Natural killer cell (primary cell): ENCODE measurements at regions of chr12 and their contacts with region 1.

Region 1: DNA sequence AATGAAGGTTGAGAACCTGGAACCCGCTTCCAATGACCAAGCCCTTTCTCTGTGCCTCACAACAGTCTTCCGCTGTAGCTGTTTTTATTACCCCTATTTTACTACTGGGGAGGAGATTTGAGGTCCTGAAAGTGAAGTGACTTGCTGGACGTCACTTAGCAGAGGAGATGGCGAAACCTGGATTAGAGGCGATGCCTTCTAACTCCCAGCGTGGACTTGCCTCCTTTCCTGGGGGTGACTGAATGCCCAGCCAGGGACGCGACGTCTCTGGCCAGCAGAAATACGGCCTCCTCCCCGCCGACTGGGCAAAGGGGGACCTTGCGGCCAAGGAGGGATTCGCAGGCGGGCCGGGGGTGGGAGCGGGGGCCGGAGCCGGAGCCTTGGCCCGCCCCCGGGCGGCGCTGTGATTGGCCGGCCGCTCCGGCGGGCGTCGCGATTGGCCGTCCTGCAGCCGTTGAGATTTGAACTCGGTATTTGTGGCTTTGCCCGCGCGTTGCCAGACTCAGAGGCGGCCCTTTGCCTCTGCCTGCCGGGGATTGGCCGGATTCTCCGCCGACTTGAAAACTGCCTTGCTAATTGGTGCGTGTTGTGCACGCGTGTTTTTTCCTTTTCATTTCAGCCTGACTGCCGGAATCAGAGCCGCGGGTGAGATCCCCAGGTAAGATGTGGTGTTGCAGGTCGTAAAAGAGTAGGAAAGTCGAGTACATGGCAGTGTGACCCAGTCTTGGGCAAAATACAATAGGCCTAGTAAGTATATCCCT is at the start of gene NCAPD2:
- DNase-seq: peak; percentile 90 to 97
- ATAC-seq: peak; percentile 85 to 94 (median 86)
- H3K4me3 ChIP-seq: peak within 1 kb of the TSS; percentile 81
- H3K4me3 Mint-ChIP-seq: peak within 1 kb of the TSS; percentile 94
- H3K27ac ChIP-seq: peak within 1 kb of the TSS; percentile 88
- H3K27ac Mint-ChIP-seq: peak within 1 kb of the TSS; percentile 97
- H3K4me1 ChIP-seq: peaks cover 22% of the 10 kb centered on the region
- H3K4me1 Mint-ChIP-seq: peaks cover 38% of the 10 kb centered on the region in 2 donors
- H3K27me3 ChIP-seq: no peaks in the 10 kb centered on the region
- H3K27me3 Mint-ChIP-seq: no peaks in the 10 kb centered on the region
- CTCF ChIP-seq: no peak
- total RNA-seq, gene NCAPD2: 38.8 to 53.1 (median 44.1) TPM

Region 2: GRCh38 chr12:6376079-6376869 is 117.4 kb before region 1 on chr12:
- intact Hi-C with region 1: no loop called
- DNase-seq: peak in 1 of 2 donors; percentile 38
- ATAC-seq: peak; percentile 55 to 61 (median 57)
- H3K4me3 ChIP-seq: no peak overlapping the region
- H3K4me3 Mint-ChIP-seq: peak overlapping the region; percentile 60
- H3K27ac ChIP-seq: no peak overlapping the region
- H3K27ac Mint-ChIP-seq: peak overlapping the region; percentile 41 to 76
- H3K4me1 ChIP-seq: peaks cover 32% of the 10 kb centered on the region
- H3K4me1 Mint-ChIP-seq: peaks cover 29 to 46% of the 10 kb centered on the region in 2 donors
- H3K27me3 ChIP-seq: no peaks in the 10 kb centered on the region
- H3K27me3 Mint-ChIP-seq: peaks cover 0 to 5% of the 10 kb centered on the region in 2 donors
- CTCF ChIP-seq: no peak

Region 3: DNA sequence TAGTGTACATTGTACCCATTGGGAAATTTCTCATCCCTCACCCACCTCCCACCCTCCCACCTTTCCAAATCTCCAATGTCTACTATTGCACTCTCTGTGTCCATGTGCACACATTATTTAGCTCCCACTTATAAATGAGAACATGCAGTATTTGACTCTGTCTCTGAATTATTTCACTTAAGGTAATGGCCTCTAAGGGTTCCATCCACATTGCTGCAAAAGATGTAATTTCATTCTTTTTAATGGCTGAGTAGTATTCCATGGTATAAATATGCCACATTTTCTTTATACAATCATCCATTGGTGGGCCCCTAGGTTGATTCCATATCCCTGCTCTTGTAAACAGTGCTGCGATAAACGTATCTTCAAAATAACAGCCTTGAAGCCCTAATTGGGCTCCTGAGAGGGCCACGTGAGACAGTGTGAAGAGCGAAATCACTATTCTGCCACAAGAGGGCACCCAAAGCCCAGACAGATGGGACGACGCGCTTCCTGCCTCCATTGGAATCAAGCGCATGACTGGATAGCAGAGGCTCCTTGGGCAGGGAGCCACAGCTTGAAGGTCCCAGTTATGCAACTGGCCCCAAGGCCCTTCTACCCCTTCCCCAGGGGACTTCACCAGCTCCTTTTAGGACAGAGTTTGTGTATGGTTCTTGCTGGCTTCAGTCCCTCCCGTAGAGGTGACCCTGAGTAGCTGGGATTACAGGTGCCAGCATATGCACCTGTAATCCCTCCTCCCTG is 70.2 kb before region 1 on chr12:
- intact Hi-C with region 1: loop called (anchors 1 kb)
- DNase-seq: peak; percentile 61 to 95
- ATAC-seq: peak; percentile 91 to 96 (median 93)
- H3K4me3 ChIP-seq: no peak overlapping the region
- H3K4me3 Mint-ChIP-seq: no peak overlapping the region
- H3K27ac ChIP-seq: no peak overlapping the region
- H3K27ac Mint-ChIP-seq: peak overlapping the region in 1 of 2 donors; percentile 68
- H3K4me1 ChIP-seq: peaks cover 32% of the 10 kb centered on the region
- H3K4me1 Mint-ChIP-seq: peaks cover 0 to 26% of the 10 kb centered on the region in 2 donors
- H3K27me3 ChIP-seq: no peaks in the 10 kb centered on the region
- H3K27me3 Mint-ChIP-seq: no peaks in the 10 kb centered on the region
- CTCF ChIP-seq: peak; percentile 79

Region 4: DNA sequence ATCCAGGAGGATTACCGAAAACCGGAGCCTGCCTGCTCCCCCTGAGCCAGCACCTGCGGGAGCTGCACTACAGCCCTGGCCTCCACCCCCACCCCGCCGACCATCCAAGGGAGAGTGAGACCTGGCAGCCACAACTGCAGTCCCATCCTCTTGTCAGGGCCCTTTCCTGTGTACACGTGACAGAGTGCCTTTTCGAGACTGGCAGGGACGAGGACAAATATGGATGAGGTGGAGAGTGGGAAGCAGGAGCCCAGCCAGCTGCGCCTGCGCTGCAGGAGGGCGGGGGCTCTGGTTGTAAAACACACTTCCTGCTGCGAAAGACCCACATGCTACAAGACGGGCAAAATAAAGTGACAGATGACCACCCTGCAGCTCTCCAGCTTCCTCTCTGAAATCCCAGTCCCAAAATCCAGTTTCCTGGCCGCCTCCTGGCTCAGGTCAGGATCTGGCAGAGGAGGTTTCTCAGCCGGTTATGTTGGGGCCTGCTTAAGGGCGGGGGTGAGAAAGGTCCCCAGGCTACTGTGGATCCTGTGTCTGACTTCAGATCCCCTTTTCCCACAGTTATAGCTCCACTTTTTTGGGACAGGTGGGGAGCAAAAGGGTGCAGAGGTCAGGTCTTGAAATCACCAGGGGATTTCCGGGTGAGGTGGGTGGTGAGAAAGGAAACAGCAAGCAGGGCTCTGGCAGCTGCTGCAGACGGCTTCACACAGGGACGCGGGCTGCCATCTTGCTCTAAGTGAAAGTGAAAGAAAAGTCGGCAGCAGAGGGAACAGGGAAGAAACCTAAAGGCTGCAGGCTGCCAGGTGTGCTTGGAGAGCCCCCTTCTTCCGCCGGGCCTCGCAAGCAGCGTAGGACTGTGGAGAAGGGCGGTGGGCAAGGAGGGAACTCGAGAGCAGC is 42.1 kb before region 1 on chr12 and contains the start of gene TAPBPL:
- intact Hi-C with region 1: loop called (anchors 5 kb)
- DNase-seq: peak; percentile 73 to 95
- ATAC-seq: peak; percentile 88 to 95 (median 94)
- H3K4me3 ChIP-seq: peak within 1 kb of the TSS; percentile 89
- H3K4me3 Mint-ChIP-seq: peak within 1 kb of the TSS; percentile 100
- H3K27ac ChIP-seq: peak within 1 kb of the TSS; percentile 98
- H3K27ac Mint-ChIP-seq: peak within 1 kb of the TSS; percentile 100
- H3K4me1 ChIP-seq: peaks cover 52% of the 10 kb centered on the region
- H3K4me1 Mint-ChIP-seq: peaks cover 33 to 46% of the 10 kb centered on the region in 2 donors
- H3K27me3 ChIP-seq: no peaks in the 10 kb centered on the region
- H3K27me3 Mint-ChIP-seq: no peaks in the 10 kb centered on the region
- CTCF ChIP-seq: no peak
- total RNA-seq, gene TAPBPL: 43.0 to 51.4 (median 46.9) TPM

Region 5: DNA sequence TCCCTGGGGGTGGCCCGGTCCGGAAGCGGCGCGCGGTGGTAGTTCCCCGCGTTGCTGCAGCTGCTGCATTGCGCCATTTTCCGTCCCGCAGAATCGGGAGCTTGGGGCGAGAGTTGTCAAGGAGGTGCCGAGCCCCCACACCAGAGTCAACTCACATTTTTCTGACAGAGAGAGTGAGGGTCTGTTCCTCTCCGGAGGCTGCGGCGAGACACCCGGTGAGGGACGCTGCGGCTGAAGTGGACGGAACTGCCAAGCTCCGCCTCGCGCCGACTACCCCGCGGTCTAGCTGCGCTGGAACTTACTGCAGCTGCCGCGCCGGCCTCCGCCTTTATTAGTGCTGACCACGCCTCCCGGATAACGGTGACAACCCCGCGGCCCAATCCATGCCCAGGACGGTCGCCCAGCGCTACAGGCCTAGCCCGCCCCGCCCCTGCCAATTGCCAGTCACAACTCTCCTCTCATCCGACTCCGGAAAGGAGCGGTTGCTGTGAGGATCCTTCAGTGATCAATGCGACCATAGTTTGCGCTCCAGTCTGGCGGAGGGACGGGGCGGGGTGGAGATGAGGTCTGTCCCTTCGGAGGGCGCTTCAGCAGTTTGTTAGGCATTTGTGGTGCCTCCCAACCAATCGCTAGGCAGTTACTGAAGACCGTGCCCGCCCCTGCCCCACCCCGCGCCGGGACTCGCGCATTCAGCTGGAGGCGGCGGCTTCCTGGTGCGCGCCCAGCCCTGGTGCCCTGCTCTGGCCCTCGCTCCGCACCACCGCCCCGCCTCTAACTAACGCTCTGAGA is 23.1 kb before region 1 on chr12 and contains the start of gene VAMP1:
- intact Hi-C with region 1: loop called (anchors 1 kb)
- DNase-seq: peak; percentile 95 to 97
- ATAC-seq: peak; percentile 91 to 97 (median 91)
- H3K4me3 ChIP-seq: peak within 1 kb of the TSS; percentile 94
- H3K4me3 Mint-ChIP-seq: peak within 1 kb of the TSS; percentile 93
- H3K27ac ChIP-seq: peak within 1 kb of the TSS; percentile 94
- H3K27ac Mint-ChIP-seq: peak within 1 kb of the TSS; percentile 95 to 97
- H3K4me1 ChIP-seq: peaks cover 26% of the 10 kb centered on the region
- H3K4me1 Mint-ChIP-seq: peaks cover 39 to 53% of the 10 kb centered on the region in 2 donors
- H3K27me3 ChIP-seq: no peaks in the 10 kb centered on the region
- H3K27me3 Mint-ChIP-seq: no peaks in the 10 kb centered on the region
- CTCF ChIP-seq: no peak
- total RNA-seq, gene VAMP1: 81.0 to 84.3 (median 83.8) TPM

Region 6: GRCh38 chr12:6520186-6520585 is 26.5 kb after region 1 on chr12:
- intact Hi-C with region 1: no loop called
- DNase-seq: no peak
- ATAC-seq: peak in 1 of 3 donors; percentile 32
- H3K4me3 ChIP-seq: no peak overlapping the region
- H3K4me3 Mint-ChIP-seq: no peak overlapping the region
- H3K27ac ChIP-seq: no peak overlapping the region
- H3K27ac Mint-ChIP-seq: peak overlapping the region; percentile 51 to 79
- H3K4me1 ChIP-seq: no peaks in the 10 kb centered on the region
- H3K4me1 Mint-ChIP-seq: peaks cover 0 to 7% of the 10 kb centered on the region in 2 donors
- H3K27me3 ChIP-seq: no peaks in the 10 kb centered on the region
- H3K27me3 Mint-ChIP-seq: no peaks in the 10 kb centered on the region
- CTCF ChIP-seq: no peak